ENCODE measurements at regions of chr10 and their contacts with region 1.

Region 1: GRCh38 chr10:44352316-44353127 is 32.4 kb downstream of the CXCL12 start:
- DNase-seq: no peak
- H3K4me3 ChIP-seq: no peak overlapping the region
- H3K27ac ChIP-seq: no peak overlapping the region
- H3K4me1 ChIP-seq: peaks cover 0 to 16% (median 6%) of the 10 kb centered on the region in 4 experiments; a peak in 5 of 7 replicates
- H3K27me3 ChIP-seq: no peaks in the 10 kb centered on the region; a peak in 1 of 7 replicates
- CTCF ChIP-seq: no peak
- EP300 ChIP-seq: no peak
- POLR2A ChIP-seq: no peak
- RAD21 ChIP-seq: no peak

Region 2: GRCh38 chr10:44010873-44011602 is 341.5 kb before region 1 on chr10:
- CTCF ChIA-PET with region 1: no interaction called
- POLR2A ChIA-PET with region 1: no interaction called
- DNase-seq: no peak
- H3K4me3 ChIP-seq: no peak overlapping the region
- H3K27ac ChIP-seq: no peak overlapping the region
- H3K4me1 ChIP-seq: no peaks in the 10 kb centered on the region
- H3K27me3 ChIP-seq: no peaks in the 10 kb centered on the region; a peak in 1 of 7 replicates
- CTCF ChIP-seq: no peak
- EP300 ChIP-seq: no peak
- POLR2A ChIP-seq: no peak
- RAD21 ChIP-seq: no peak

Region 3: GRCh38 chr10:44153918-44154670 is 198.4 kb before region 1 on chr10:
- CTCF ChIA-PET with region 1: no interaction called
- POLR2A ChIA-PET with region 1: no interaction called
- DNase-seq: no peak
- H3K4me3 ChIP-seq: no peak overlapping the region
- H3K27ac ChIP-seq: no peak overlapping the region
- H3K4me1 ChIP-seq: no peaks in the 10 kb centered on the region
- H3K27me3 ChIP-seq: no peaks in the 10 kb centered on the region
- CTCF ChIP-seq: no peak
- EP300 ChIP-seq: no peak
- POLR2A ChIP-seq: no peak
- RAD21 ChIP-seq: no peak

Region 4: DNA sequence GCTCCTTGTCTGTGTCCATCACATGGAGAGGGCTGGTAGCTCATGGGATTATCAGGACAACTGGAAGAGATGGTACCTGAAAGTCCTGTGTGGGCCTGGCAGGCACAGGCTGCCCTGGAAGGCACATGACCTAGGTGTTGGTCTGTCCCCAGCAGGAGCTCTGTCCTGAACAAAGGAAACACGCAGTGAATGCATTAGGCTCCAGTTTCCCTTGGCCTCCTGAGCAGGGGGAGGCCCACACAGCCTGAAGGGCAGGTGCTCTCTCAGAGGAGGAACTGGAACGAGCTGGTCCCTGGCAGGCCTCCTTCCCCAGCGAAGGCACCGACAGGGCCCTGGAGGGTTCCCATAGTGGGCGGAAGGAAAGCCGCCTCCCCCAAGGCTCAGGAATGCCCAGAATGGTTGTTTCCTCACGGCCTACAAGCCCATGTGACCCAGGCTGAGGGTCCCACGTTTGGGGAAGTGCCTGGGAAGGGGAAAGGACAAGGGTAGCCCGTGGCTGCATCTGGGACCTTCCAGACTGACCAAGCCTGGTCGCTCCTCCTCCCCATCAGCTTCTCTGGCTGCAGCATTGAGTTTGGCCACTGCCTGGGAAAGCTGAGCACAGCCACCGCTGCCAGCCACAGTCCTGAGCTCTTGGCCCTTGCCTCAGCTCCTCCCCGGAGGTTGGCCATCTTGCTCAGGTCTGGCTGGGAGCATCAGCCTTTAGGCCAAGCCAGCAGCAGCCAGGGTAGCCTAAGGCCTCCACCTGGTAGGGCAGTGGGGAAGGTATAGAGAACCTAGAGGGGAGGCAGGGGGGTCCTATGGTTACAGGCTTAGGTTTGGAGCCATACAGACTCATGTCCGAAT is 10.6 kb after region 1 on chr10:
- CTCF ChIA-PET with region 1: interaction called, 43 read pairs
- POLR2A ChIA-PET with region 1: interaction called, 3 read pairs
- DNase-seq: no peak
- H3K4me3 ChIP-seq: no peak overlapping the region
- H3K27ac ChIP-seq: no peak overlapping the region
- H3K4me1 ChIP-seq: peaks cover 0 to 21% (median 3%) of the 10 kb centered on the region in 4 experiments; a peak in 4 of 7 replicates
- H3K27me3 ChIP-seq: no peaks in the 10 kb centered on the region; a peak in 1 of 7 replicates
- CTCF ChIP-seq: no peak
- EP300 ChIP-seq: peak in 1 of 2 experiments; percentile 33; a peak in 1 of 3 replicates
- POLR2A ChIP-seq: no peak
- RAD21 ChIP-seq: no peak

Region 5: DNA sequence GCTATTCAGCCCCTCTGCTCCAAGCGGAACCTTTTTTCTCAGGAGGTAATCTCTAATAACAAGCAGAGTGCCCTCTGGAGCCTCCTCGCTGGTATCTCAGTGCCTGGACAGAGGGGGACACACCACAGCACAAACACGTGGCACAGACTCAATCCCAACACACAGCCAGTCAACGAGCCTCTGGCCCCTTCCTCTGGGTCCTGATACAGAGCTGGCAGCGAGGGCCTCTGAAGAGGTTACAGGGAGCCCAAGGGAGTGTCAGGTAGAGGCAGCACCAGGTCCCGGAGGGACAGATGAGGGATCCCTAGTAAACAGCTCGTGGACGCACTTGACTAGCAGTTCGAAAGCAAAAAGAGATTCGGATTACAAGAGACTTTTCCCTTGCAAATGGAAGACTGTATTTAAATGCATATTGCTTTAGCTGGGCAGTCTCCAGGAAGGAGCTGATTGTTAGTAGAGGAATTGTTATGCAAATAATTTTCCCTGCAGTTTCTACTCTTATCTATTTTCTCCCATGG is 18.3 kb after region 1 on chr10:
- CTCF ChIA-PET with region 1: interaction called, 20 read pairs
- POLR2A ChIA-PET with region 1: interaction called, 3 read pairs
- DNase-seq: peak; percentile 58 to 80
- H3K4me3 ChIP-seq: peak overlapping the region in 3 of 4 experiments; percentile 5 to 44 (median 23); a peak in 5 of 8 replicates
- H3K27ac ChIP-seq: peak overlapping the region; percentile 85
- H3K4me1 ChIP-seq: peaks cover 6 to 29% (median 19%) of the 10 kb centered on the region in 4 experiments
- H3K27me3 ChIP-seq: no peaks in the 10 kb centered on the region; a peak in 1 of 7 replicates
- CTCF ChIP-seq: peak; percentile 42 to 62 (median 54)
- EP300 ChIP-seq: 0 out of 3 replicates have a peak, but pooled peaks of 1 of the 2 experiments have one; percentile 22
- POLR2A ChIP-seq: no peak; a peak in 1 of 3 replicates
- RAD21 ChIP-seq: peak; percentile 47 to 61

Measured in H1 (cell line).